Activated T-helper 1 cell treated with anti-CD3 and anti-CD28 coated beads, Interleukin-12 subunit alpha, Interleukin-12 subunit beta, Interleukin-2, Interleukin-4 antibody, amounts not matched to agents 30 ng/mL and 10 ng/mL and 1 ng/mL, durations not matched to agents 14 hours and 24 hours and 36 hours (primary cell): ENCODE measurements at regions of chrX and their contacts with region 1.

Region 1: DNA sequence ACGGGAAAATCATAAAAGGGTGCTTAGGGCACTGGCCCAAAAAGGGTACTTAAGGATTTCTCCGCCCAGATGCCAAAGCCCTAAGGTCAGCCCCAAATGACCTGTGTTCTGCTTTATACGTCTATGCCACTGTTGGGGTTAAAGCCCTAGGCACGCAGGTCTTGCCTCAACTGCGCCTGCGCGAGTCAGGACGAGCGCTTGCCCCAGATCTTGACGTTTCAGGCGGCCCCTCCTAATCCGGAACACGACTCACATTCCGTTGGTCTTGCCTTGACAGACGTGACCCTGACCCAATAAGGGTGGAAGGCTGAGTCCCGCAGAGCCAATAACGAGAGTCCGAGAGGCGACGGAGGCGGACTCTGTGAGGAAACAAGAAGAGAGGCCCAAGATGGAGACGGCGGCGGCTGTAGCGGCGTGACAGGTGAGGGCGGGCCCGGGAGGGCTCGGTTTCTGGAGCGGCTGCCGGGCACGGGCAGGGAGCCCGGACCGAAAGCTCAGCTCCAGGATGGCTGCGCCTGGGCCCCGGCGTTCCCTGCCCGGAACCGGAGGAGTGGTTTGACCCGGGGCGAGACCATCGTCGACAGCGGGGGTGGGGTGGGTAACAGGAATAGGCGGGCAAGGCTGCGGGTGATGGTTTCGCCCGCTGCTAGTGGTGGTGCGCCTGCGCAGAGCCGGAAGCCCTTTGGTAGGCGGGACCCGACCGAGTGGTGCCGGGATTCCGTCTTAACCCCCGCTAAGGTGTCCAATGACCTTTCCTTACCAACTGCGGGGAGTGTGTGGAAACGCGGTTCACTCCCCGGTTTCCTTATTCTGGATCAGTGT is at the start of gene ARAF:
- DNase-seq: peak; percentile 93
- H3K4me3 Mint-ChIP-seq: peak within 1 kb of the TSS; percentile 92
- H3K27ac Mint-ChIP-seq: peak within 1 kb of the TSS; percentile 99
- H3K4me1 Mint-ChIP-seq: peaks cover 40% of the 10 kb centered on the region
- H3K27me3 Mint-ChIP-seq: no peaks in the 10 kb centered on the region
- total RNA-seq, gene ARAF: 75.9 and 84.4 TPM in 2 replicates

Region 2: GRCh38 chrX:47233337-47234113 is 327.5 kb before region 1 on chrX:
- intact Hi-C with region 1: loop called (anchors 1 kb)
- DNase-seq: peak; percentile 87
- H3K4me3 Mint-ChIP-seq: peak overlapping the region; percentile 87
- H3K27ac Mint-ChIP-seq: peak overlapping the region; percentile 90
- H3K4me1 Mint-ChIP-seq: peaks cover 19% of the 10 kb centered on the region
- H3K27me3 Mint-ChIP-seq: no peaks in the 10 kb centered on the region

Region 3: GRCh38 chrX:47581731-47582647 is 20.9 kb after region 1 on chrX and contains the start of gene TIMP1:
- intact Hi-C with region 1: loop called (anchors 1 kb)
- DNase-seq: peak; percentile 78
- H3K4me3 Mint-ChIP-seq: peak within 1 kb of the TSS; percentile 67
- H3K27ac Mint-ChIP-seq: peak within 1 kb of the TSS; percentile 67
- H3K4me1 Mint-ChIP-seq: peaks cover 46% of the 10 kb centered on the region
- H3K27me3 Mint-ChIP-seq: peaks cover 3% of the 10 kb centered on the region
- total RNA-seq, gene TIMP1: 61.7 and 70.1 TPM in 2 replicates

Region 4: GRCh38 chrX:47650164-47651042 is 89.4 kb after region 1 on chrX and contains the start of gene ELK1:
- intact Hi-C with region 1: loop called (anchors 1 kb)
- DNase-seq: peak; percentile 85
- H3K4me3 Mint-ChIP-seq: peak within 1 kb of the TSS; percentile 95
- H3K27ac Mint-ChIP-seq: peak within 1 kb of the TSS; percentile 96
- H3K4me1 Mint-ChIP-seq: peaks cover 66% of the 10 kb centered on the region
- H3K27me3 Mint-ChIP-seq: no peaks in the 10 kb centered on the region
- total RNA-seq, gene ELK1: 99.3 TPM in 2 replicates

Region 5: GRCh38 chrX:47751670-47752069 is 190.6 kb after region 1 on chrX:
- intact Hi-C with region 1: loop called (anchors 1 kb)
- DNase-seq: no peak
- H3K4me3 Mint-ChIP-seq: no peak overlapping the region
- H3K27ac Mint-ChIP-seq: peak overlapping the region; percentile 55
- H3K4me1 Mint-ChIP-seq: no peaks in the 10 kb centered on the region
- H3K27me3 Mint-ChIP-seq: peaks cover 2% of the 10 kb centered on the region